Mammary epithelial cell (primary cell): ENCODE measurements at regions of chr2 and their contacts with region 1.

Region 1: DNA sequence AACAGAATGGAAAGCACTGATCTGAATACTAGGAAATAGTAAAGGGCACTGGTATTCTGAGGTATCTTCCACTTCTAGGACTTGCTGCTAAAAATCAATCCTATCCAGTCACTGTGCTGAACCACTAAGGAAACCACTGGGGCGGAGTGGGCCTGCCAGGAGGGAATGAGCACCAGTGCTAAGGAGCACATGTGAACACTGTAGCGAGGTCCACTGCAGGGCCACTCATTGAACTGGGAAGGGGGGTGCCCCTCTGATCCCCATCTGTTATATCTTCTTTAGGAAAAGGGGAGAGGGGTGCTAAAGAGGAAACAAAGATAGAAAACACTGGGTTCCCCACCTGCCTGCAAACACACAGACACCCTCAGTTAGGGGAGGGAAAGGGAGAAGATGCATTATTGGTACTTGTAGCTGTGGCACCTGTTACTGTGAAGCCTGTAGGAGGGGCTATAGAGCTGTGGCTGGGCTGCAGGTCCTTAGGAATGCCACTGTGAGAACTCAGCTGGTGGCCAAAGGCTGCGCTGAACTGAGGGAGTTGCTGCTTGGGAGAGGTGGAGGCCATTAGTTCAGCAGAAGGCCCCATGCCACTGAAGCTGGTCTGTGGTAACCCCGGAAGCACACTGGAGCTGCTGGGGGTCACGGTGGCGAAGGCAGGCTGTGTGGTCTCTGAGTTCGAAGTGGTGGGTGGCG is 81.8 kb downstream of the INO80D start:
- DNase-seq: no peak
- H3K4me3 ChIP-seq: no peak overlapping the region
- H3K27ac ChIP-seq: no peak overlapping the region
- H3K4me1 ChIP-seq: no peaks in the 10 kb centered on the region
- H3K27me3 ChIP-seq: no peaks in the 10 kb centered on the region
- CTCF ChIP-seq: peak; percentile 10 to 38

Region 2: DNA sequence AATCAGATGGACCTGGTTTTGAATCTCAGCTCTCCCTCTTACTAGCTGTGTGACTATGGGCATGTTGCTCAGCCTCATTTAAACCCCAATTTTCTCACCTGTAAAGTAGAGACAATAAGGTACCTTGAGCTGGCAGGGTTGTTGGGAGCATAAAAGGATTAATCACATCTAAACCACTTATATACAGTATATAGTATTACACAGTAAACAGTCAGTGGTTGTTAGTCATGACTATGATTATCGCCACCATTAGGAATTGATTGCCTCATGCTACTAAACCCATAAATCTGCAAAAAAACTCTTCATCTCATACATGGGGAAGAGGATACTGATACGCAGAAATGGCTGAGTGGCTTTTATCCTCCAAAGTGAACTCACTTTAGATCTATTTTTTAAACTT is 16.0 kb after region 1 on chr2:
- CTCF ChIA-PET with region 1: no interaction called
- dilution Hi-C with region 1: no loop called
- in situ Hi-C with region 1: no loop called
- intact Hi-C with region 1: loop called (anchors 2 kb)
- DNase-seq: no peak
- H3K4me3 ChIP-seq: no peak overlapping the region
- H3K27ac ChIP-seq: no peak overlapping the region
- H3K4me1 ChIP-seq: no peaks in the 10 kb centered on the region
- H3K27me3 ChIP-seq: no peaks in the 10 kb centered on the region
- CTCF ChIP-seq: no peak